Right ventricle myocardium inferior (tissue), 1 donor: ENCODE measurements at regions of chr3 and their contacts with region 1.

Region 1: DNA sequence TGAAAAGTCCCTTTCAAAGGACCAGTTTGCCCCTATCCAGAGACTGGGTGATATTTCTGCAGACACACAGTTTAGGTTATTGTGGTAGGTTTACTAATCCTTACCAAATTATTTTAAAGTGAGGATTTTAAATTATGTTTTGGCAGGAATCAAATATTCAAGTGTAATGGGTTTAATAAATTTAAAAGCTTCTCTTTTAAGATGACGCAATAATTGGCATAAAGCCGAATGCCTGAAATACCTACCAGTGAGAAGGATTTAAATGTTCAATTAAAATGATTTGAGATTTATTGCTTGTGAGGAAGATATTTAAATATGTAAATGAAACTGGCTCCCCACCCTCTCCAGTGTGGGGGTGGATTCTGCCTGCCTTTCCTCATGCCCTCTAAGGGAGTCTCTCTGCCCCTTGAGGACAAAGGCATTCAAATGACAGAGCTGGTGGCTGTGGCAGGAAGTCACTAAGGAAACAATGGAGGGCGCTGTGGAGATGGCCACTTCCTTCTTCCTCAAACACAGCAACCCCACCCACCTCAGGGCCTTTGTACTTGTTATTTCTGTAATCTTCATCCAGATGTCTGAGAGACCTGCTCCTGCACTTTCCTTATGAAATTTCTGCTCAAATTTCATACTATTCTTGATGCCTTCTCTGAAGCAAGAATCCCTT is 131.7 kb downstream of the TNIK start:
- DNase-seq: no peak
- ATAC-seq: peak; percentile 40

Region 2: DNA sequence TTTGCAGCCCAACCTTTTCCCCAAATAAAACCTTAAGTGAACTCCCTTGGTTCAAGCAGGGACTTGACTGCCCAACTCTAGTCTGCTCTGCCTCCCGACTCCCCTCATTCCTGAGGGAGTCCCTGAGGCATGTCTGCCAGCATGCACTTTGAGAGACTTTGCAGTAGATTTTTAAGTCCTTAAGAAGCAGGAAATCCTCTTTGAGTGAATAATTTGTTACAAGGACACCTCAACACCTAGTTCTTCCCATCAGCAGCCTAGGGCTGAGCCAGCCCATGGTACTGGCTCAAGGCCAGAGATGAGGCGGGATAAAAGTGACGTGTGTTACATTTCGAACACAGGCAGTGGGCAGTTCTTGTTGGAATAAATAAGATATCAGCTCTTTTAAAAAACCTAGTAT is 97.7 kb before region 1 on chr3:
- intact Hi-C with region 1: no loop called
- DNase-seq: peak; percentile 46
- ATAC-seq: no peak

Region 3: GRCh38 chr3:171396048-171396447 is 67.5 kb after region 1 on chr3:
- intact Hi-C with region 1: loop called (anchors 5 kb)
- DNase-seq: no peak
- ATAC-seq: no peak